AG04449 (cell line): ENCODE measurements at regions of chr1 and their contacts with region 1.

Region 1: DNA sequence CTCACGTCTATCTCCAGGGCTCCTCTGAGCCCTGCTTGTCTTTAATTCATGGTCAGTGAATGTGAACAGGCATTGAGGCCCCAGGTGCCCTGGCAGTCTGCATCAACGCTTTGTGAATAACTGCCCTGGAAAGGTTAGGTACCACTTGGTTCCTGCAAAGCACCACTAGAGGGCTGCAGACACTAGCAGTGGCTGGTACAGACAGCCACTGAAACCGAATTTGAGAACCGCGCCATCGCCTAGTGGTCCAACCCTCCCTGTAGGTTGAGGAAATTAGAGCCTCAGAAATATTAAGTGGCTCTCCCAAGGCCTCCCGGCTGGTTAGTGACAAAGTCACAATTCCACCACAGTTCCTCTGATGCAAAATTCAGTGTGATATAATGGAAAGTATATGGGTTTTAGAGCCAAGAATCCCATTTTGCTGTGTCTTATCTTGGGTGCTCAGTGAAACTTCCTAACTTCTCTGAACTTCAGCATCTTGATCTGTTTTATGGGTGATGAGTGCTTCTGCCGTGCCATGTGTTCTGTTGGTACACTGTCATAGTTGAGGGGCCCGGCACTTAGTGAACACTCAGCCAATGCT is 46.2 kb upstream of the BCL9 start:
- DNase-seq: no peak
- H3K4me3 ChIP-seq: no peak overlapping the region
- CTCF ChIP-seq: peak; percentile 98

Region 2: DNA sequence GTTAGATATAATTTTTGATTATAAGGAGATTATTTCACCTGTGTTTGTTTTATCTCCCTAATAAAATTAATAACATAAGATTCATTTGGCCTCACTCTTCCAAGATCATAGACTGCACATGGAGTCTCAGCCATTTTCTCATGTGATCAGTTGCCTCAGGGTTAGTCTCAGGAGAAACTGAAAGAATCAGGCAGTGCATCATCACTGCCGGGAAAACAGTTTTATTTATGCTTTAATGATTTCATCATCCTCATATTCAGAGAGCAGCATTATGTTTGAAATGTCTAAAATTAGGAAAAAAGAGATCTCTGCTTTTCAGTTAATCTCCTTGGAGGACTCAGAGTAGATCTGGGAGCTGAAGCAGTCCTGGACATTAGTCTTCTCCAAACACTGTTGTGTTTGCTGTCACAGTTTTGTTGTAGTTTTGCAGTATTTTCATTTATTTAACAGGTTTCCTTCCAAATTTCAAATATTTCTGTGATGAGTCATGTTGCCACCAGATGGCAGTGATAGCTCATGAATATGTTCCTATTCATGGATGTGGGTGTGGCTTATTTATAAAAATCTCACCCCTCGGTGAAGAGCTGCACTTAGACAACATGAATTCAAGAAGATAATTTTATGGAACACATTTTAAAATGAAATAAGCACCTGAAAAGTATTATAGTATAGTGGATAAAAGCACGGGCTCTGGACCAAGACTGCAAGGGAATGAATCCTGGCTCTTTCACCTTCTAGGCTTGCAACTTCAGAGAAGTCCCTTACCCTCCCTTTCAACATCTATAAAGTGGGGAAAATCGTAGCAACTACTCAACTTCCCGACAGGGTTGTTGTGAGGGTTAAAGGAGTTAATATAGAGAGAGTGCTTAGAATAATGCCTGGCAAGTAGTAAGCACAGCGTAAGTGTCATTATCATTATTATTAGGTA is 221.4 kb before region 1 on chr1:
- CTCF ChIA-PET with region 1: interaction called, 11 read pairs
- POLR2A ChIA-PET with region 1: no interaction called
- DNase-seq: peak; percentile 42
- H3K4me3 ChIP-seq: no peak overlapping the region; the same call in 1 of the 2 replicates
- CTCF ChIP-seq: peak; percentile 26

Region 3: DNA sequence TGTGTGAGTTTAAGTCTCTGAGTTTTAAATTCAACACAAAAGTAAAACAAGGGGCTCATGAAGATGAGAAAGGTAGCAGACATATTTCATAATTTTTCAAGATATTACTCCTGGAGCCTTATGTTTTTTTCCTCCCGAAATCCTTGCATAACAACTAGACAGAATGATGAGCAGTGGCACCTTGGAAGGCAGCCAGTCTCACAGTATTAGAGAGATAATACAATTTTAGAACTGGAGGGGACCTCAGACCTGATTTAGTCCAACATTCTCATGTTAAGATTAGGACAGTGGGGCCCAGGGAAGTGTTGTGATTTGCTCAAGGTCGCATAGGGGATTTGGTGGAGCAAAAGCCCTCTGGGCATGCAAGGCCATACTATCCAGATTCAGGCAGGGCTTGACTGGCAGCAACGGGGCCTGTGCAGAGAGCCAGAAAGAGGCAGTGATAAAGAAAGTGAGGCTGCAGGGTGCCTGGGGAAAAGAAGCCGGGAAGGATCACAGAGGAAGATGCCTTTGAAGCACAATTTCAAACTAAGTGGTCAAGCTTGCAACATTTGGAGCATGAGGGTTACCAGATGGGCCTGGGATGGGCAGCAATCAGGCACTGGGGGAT is 14.8 kb after region 1 on chr1:
- CTCF ChIA-PET with region 1: interaction called, 12 read pairs
- POLR2A ChIA-PET with region 1: no interaction called
- DNase-seq: no peak
- H3K4me3 ChIP-seq: no peak overlapping the region
- CTCF ChIP-seq: no peak

Region 4: GRCh38 chr1:147627435-147628110 is 132.5 kb after region 1 on chr1:
- CTCF ChIA-PET with region 1: interaction called, 59 read pairs
- POLR2A ChIA-PET with region 1: no interaction called
- DNase-seq: no peak
- H3K4me3 ChIP-seq: no peak overlapping the region
- CTCF ChIP-seq: peak; percentile 89

Region 5: DNA sequence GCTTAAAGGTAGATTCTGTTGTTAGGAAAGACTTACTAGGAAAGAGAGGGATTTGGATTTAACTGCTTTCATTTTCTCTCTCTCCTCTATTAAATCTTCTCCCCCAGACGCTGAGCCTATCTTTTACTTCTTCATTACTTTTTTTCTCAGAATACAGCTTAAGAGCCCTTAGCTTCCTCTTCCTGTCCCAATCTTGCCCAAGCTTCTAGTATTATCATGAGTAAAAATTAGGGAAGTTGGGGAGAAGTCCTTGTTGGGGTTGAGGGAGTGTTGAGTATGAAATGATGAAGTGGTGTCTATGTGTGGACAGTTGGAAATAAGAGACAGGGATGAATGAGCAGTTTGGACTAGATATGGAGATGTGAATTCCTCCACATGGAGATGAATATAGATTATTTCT is 140.3 kb after region 1 on chr1:
- CTCF ChIA-PET with region 1: interaction called, 43 read pairs
- POLR2A ChIA-PET with region 1: no interaction called
- DNase-seq: no peak
- H3K4me3 ChIP-seq: no peak overlapping the region
- CTCF ChIP-seq: no peak

Region 6: GRCh38 chr1:147640553-147641165 is 145.6 kb after region 1 on chr1:
- CTCF ChIA-PET with region 1: interaction called, 43 read pairs
- POLR2A ChIA-PET with region 1: no interaction called
- DNase-seq: peak; percentile 24
- H3K4me3 ChIP-seq: no peak overlapping the region
- CTCF ChIP-seq: peak; percentile 87

Region 7: GRCh38 chr1:147890177-147890790 is 395.2 kb after region 1 on chr1:
- CTCF ChIA-PET with region 1: interaction called, 15 read pairs
- POLR2A ChIA-PET with region 1: no interaction called
- DNase-seq: no peak
- H3K4me3 ChIP-seq: no peak overlapping the region
- CTCF ChIP-seq: peak; percentile 46